Esophagus squamous epithelium (tissue), 5 donors: ENCODE measurements at regions of chr6 and their contacts with region 1.

Region 1: DNA sequence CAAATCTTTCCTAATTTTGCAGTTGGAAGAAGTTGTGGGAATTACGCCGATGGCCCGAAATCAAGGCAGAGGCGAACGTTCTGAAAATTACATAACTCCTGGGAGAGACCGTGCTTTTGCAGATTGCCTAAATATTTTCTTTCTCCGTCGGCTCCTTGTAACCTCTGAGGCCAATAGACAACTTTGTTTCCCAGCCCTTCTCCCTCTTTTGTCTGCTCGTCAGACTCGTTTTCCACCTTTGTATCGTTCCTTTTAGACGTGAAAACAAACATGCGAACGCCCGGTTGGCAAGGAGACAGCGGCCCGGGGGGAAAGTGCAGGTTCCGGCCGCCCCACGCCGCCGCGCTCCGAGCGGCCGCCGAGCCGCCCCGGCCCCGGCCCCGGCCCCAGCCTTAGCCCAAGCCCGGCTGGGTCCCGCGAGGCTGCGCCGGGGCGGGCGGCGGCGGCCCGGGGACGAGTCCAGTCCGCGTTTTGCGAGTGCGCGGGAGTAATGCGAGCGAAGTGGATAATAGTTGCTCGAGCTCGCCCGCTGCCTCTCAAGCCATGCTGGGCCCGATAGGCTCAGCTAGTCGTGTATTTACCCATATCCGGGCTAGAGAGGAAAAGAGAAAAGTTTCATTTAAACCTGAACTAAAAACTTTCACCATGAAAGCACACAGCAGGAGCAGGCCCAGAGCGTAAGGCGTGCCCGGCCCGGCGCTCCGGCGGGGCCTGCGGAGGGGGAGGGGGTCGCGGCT is at the start of gene ARID1B:
- DNase-seq: peak; percentile 35
- H3K4me3 ChIP-seq: peak within 1 kb of the TSS; percentile 83 to 91 (median 86)
- H3K27ac ChIP-seq: peak within 1 kb of the TSS; percentile 98 to 99 (median 99)
- H3K4me1 ChIP-seq: peaks cover 0 to 42% (median 27%) of the 10 kb centered on the region in 3 donors
- H3K27me3 ChIP-seq: no peaks in the 10 kb centered on the region
- CTCF ChIP-seq: no peak
- POLR2A ChIP-seq: peak in 2 of 4 donors; percentile 60 to 66
- total RNA-seq, gene ARID1B: 25.2 to 103 (median 59.5) TPM

Region 2: GRCh38 chr6:156564127-156564806 is 212.7 kb before region 1 on chr6:
- intact Hi-C with region 1: loop called (anchors 10 kb)
- DNase-seq: peak; percentile 34
- H3K4me3 ChIP-seq: no peak overlapping the region
- H3K27ac ChIP-seq: no peak overlapping the region
- H3K4me1 ChIP-seq: peaks cover 0 to 14% (median 4%) of the 10 kb centered on the region in 3 donors
- H3K27me3 ChIP-seq: no peaks in the 10 kb centered on the region
- CTCF ChIP-seq: peak; percentile 53 to 93 (median 91)
- POLR2A ChIP-seq: no peak

Region 3: DNA sequence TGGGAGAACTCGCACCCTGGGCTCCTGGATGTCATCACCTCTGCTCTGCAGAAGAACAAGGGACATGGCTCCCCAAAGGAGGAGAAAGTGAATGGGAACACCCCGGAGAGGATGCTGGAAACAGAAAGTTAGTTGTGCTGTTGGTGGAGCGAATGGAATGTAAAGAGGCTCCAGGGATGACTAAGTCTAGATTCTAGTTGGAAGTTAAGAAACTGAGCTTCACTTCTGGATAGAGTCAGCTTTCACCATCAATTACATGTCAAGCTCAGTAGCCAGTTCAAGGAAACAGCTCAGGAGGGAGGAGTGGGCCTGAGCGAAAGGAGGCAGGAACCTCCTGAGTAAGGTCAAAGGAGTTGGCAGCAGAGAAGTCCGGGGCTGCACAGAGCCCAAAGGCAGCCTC is 131.9 kb before region 1 on chr6:
- intact Hi-C with region 1: no loop called
- DNase-seq: no peak
- H3K4me3 ChIP-seq: no peak overlapping the region
- H3K27ac ChIP-seq: no peak overlapping the region
- H3K4me1 ChIP-seq: no peaks in the 10 kb centered on the region
- H3K27me3 ChIP-seq: no peaks in the 10 kb centered on the region
- CTCF ChIP-seq: no peak
- POLR2A ChIP-seq: no peak

Region 4: GRCh38 chr6:156686995-156687788 is 89.8 kb before region 1 on chr6:
- intact Hi-C with region 1: loop called (anchors 5 kb)
- DNase-seq: peak; percentile 40
- H3K4me3 ChIP-seq: peak overlapping the region; percentile 58 to 90 (median 74)
- H3K27ac ChIP-seq: peak overlapping the region; percentile 96 to 99 (median 98)
- H3K4me1 ChIP-seq: peaks cover 0 to 21% (median 8%) of the 10 kb centered on the region in 3 donors
- H3K27me3 ChIP-seq: no peaks in the 10 kb centered on the region
- CTCF ChIP-seq: no peak
- POLR2A ChIP-seq: peak in 2 of 4 donors; percentile 81 to 93

Region 5: GRCh38 chr6:156719720-156720563 is 57.1 kb before region 1 on chr6:
- intact Hi-C with region 1: loop called (anchors 5 kb)
- DNase-seq: peak; percentile 77
- H3K4me3 ChIP-seq: peak overlapping the region; percentile 17 to 63 (median 44)
- H3K27ac ChIP-seq: peak overlapping the region; percentile 93 to 96 (median 94)
- H3K4me1 ChIP-seq: peaks cover 15 to 40% (median 28%) of the 10 kb centered on the region in 3 donors
- H3K27me3 ChIP-seq: no peaks in the 10 kb centered on the region
- CTCF ChIP-seq: no peak
- POLR2A ChIP-seq: peak in 2 of 4 donors; percentile 29 to 46

Region 6: GRCh38 chr6:156741287-156742073 is 35.5 kb before region 1 on chr6:
- intact Hi-C with region 1: no loop called
- DNase-seq: no peak
- H3K4me3 ChIP-seq: no peak overlapping the region
- H3K27ac ChIP-seq: no peak overlapping the region
- H3K4me1 ChIP-seq: no peaks in the 10 kb centered on the region
- H3K27me3 ChIP-seq: no peaks in the 10 kb centered on the region
- CTCF ChIP-seq: no peak
- POLR2A ChIP-seq: no peak

Region 7: GRCh38 chr6:156828280-156828703 is 51.3 kb after region 1 on chr6:
- intact Hi-C with region 1: no loop called
- DNase-seq: no peak
- H3K4me3 ChIP-seq: no peak overlapping the region
- H3K27ac ChIP-seq: peak overlapping the region; percentile 51 to 83 (median 78)
- H3K4me1 ChIP-seq: peaks cover 19 to 63% (median 24%) of the 10 kb centered on the region in 3 donors
- H3K27me3 ChIP-seq: no peaks in the 10 kb centered on the region
- CTCF ChIP-seq: no peak
- POLR2A ChIP-seq: no peak

Region 8: DNA sequence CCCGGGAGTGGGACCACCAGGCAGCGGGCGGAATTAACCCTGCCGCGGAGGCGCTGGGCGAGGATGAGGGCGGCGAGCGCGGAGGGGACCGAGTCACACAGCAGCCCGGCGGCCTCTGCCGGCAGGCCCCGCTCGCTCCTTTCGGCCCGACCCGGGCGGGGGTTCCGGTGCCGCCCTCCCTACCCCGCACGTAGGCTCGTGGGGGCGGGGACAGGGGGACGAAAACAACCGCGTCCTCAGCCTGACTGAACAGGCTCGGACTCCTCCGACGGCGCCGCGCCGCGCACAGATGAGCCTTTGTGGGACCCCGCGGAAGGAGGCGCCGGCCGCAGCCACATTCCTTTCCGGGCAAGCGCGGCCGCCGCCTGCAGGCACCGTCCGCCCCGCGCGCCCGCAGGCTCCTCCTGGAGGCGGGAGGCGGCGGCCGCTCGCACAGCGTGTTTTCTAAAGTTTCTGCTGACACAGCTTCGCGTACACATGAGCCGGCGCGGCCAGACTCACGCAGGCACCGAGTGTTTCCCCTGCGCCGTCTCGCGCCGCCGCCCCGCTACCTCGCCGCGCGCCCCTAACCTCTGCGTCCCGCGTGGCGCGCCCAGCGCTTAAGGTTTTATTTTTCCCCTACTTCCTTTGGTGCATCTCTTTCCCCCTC is 244.5 kb after region 1 on chr6:
- intact Hi-C with region 1: loop called (anchors 5 kb)
- DNase-seq: peak; percentile 71
- H3K4me3 ChIP-seq: peak overlapping the region; percentile 80 to 92 (median 89)
- H3K27ac ChIP-seq: peak overlapping the region; percentile 99 to 100 (median 100)
- H3K4me1 ChIP-seq: peaks cover 8 to 58% (median 21%) of the 10 kb centered on the region in 3 donors
- H3K27me3 ChIP-seq: no peaks in the 10 kb centered on the region
- CTCF ChIP-seq: peak in 5 of 6 experiments; percentile 21 to 49 (median 27)
- POLR2A ChIP-seq: peak in 3 of 4 donors; percentile 79 to 98 (median 96)